PC-3 (cell line): ENCODE measurements at regions of chr1 and their contacts with region 1.

Region 1: DNA sequence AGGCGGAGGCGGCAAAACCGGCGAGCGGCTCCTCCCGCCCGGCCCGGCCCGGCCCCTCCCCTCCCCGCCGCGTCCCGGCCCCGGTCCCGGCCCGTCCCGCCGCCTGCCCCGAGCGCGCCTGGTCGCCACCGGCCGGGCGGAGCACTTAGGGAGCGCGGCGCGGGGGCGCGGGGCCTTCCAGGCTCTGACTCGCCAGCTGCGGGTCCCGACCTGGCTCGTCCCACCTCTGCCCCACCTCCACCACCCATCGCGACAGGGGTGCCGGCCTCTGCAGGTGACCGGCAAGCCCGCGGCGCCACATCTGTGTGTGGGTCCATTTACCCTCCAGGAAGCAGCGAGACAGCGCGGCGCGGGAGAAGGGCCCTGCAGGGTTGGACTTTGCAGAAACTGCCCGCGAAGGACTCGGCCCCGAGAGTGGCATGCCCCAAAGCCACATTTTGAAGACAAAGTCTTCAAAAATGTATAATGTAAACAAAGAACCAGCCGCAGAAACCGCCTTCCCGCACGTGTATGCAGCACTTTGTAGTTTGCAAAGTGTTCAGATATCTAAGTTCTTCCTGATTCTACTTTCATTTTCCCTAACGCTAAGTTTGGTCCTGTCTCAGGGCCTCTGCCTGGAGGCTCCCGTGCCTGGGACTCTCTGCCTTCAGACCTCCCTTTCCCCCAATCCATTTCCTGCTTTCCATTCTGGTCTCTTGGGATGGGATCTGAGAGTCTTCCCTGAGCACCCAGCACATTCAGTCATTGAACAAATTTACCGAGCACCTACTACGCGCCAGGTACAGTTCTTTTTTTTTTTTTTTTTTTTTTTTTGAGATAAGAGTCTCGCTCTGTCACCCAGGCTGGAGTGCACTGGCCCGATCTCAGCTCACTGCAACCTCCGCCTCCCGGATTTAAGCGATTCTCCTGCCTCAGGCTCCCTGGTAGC is at the start of gene TMCO4:
- DNase-seq: peak; percentile 51
- ATAC-seq: peak; percentile 74
- H3K4me3 ChIP-seq: peak within 1 kb of the TSS; percentile 75
- H3K27ac ChIP-seq: peak within 1 kb of the TSS; percentile 59
- H3K4me1 ChIP-seq: peaks cover 17% of the 10 kb centered on the region; the same call in 1 of the 2 replicates
- H3K27me3 ChIP-seq: no peaks in the 10 kb centered on the region
- CTCF ChIP-seq: no peak
- total RNA-seq, gene TMCO4: 16.0 and 19.7 TPM in 2 replicates

Region 2: DNA sequence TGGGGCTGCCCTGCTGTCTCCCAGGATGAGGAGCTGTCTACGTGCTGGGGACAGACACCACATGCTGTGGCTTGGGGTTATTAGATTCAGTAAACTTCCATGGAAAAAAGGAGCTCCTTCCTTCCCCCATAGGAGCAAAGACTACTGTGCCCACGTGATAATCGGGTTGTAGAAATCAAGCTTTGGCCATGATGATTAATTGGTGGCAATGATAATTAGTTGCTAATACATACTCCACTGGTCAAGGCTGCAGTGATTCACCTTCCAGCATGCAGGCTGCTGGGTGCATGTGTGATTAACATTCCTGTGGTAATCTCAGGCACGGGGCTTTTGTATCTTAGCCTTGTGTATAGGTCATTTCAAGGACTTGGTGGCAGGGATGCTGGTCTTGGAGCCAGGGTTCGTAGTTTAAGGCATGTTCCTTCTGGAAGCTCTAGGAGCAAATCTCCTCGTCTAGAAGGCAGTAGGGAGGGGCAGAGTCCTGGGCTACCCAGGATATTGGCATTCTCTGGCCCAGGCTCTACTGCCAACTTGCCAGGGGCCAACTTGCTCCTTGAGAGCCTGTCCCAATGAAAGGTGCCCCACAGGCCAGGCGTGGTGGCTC is 41.8 kb before region 1 on chr1:
- CTCF ChIA-PET with region 1: no interaction called
- POLR2A ChIA-PET with region 1: no interaction called
- intact Hi-C with region 1: no loop called
- DNase-seq: peak; percentile 54
- ATAC-seq: peak; percentile 54
- H3K4me3 ChIP-seq: no peak overlapping the region
- H3K27ac ChIP-seq: peak overlapping the region; percentile 15
- H3K4me1 ChIP-seq: peaks cover 16% of the 10 kb centered on the region
- H3K27me3 ChIP-seq: no peaks in the 10 kb centered on the region
- CTCF ChIP-seq: no peak

Region 3: DNA sequence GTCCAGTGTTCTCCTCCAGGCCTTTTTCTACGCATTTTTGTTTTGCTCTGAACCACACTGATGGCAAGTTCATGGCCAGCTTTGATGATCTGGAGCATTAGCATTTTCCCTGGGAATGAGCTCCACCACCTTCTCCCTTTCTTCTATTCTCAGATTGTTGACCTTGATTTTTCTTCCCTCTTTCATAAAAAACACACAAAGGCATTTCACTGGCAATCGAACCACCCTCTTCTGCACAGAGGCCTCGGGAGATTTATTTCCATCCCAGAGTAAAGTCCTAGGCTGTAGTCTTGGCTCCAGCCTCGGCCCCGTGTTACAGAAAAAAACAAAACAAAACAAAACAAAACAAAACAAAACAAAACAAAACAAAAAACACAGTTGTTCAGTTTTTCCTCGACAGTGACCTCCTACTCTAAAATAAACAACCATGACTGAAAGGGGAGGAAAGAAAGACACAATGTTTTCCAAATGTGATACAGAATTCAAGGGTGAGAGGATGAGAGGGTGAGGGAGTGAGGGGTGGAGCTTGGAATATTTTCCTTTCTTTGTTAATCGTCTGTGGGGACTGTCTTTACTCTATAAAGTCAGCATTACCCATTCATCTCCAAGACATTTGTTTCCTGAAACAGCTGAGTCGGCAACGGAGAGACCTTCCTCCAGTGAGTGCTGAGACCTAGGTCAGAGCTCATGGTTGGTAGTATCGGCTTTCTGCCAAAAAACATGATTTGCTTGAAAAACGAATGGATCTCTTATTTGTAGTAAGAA is 44.8 kb after region 1 on chr1:
- CTCF ChIA-PET with region 1: no interaction called
- POLR2A ChIA-PET with region 1: interaction called, 3 read pairs
- intact Hi-C with region 1: loop called (anchors 5 kb)
- DNase-seq: no peak
- ATAC-seq: no peak
- H3K4me3 ChIP-seq: no peak overlapping the region
- H3K27ac ChIP-seq: no peak overlapping the region
- H3K4me1 ChIP-seq: peaks cover 11% of the 10 kb centered on the region; the same call in 1 of the 2 replicates
- H3K27me3 ChIP-seq: no peaks in the 10 kb centered on the region
- CTCF ChIP-seq: no peak

Region 4: DNA sequence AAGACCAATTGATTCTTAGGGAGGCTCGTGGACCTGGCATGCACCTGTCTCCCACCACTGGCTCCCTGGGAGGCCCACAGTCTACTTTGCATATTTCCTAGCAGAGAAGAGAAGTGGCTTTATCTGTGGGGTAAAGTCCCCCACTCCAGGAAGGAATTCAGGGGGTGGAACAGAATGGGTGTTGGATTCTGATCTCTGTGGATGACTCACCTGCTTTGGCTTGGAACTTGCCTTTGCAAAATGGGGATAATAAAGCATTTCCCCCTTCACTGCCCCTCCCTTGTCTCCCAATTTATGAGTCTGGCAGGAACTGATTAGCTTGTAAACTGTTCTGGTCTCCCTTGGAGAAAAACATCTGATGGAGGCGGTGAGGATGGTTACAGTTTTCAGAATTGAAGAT is 60.9 kb after region 1 on chr1:
- CTCF ChIA-PET with region 1: interaction called, 5 read pairs
- POLR2A ChIA-PET with region 1: no interaction called
- intact Hi-C with region 1: loop called (anchors 5 kb)
- DNase-seq: peak; percentile 83
- ATAC-seq: peak; percentile 76
- H3K4me3 ChIP-seq: no peak overlapping the region
- H3K27ac ChIP-seq: peak overlapping the region; percentile 81
- H3K4me1 ChIP-seq: peaks cover 45% of the 10 kb centered on the region
- H3K27me3 ChIP-seq: no peaks in the 10 kb centered on the region
- CTCF ChIP-seq: no peak

Region 5: DNA sequence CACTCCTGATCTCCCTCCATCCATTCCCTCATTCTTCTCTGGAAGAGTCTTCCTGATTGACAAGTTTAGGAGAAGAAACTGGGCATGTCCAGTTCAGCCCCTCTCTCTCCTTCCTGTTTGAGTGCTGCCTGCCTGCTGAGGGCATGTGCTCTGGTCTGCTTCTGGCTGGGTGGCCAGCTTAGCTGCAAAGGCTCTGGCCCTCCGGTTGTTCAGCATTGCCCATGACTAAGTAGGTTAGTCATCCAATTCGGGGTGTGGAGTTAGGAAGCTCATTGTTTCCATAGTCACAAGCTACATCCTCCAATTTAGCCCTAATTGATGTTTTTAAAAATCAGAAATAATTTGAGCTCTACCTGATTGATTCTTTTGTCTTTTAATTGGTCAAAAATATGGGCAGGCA is 148.9 kb after region 1 on chr1:
- CTCF ChIA-PET with region 1: no interaction called
- POLR2A ChIA-PET with region 1: no interaction called
- intact Hi-C with region 1: no loop called
- DNase-seq: peak; percentile 90
- ATAC-seq: peak; percentile 100
- H3K4me3 ChIP-seq: no peak overlapping the region
- H3K27ac ChIP-seq: no peak overlapping the region
- H3K4me1 ChIP-seq: peaks cover 6% of the 10 kb centered on the region; the same call in 1 of the 2 replicates
- H3K27me3 ChIP-seq: no peaks in the 10 kb centered on the region
- CTCF ChIP-seq: no peak